ENCODE measurements at regions of chr4 and their contacts with region 1.

Region 1: GRCh38 chr4:39638354-39639240 is at the start of gene SMIM14:
- DNase-seq: peak; percentile 97 to 98
- ATAC-seq: peak; percentile 88 to 90
- H3K4me3 ChIP-seq: peak within 1 kb of the TSS; percentile 95 to 100 (median 98)
- H3K27ac ChIP-seq: peak within 1 kb of the TSS; percentile 99 to 100 (median 100)
- H3K4me1 ChIP-seq: peaks cover 22 to 28% of the 10 kb centered on the region in 2 donors
- H3K27me3 ChIP-seq: no peaks in the 10 kb centered on the region
- CTCF ChIP-seq: peak in 3 of 5 experiments; percentile 31 to 38 (median 35)
- POLR2A ChIP-seq: peak; percentile 98 to 99
- total RNA-seq, gene SMIM14: 6.9 to 15.3 (median 9.5) TPM

Region 2: GRCh38 chr4:39365830-39366771 is 272.5 kb before region 1 on chr4 and contains the start of gene RFC1:
- in situ Hi-C with region 1: no loop called
- intact Hi-C with region 1: loop called (anchors 10 kb)
- DNase-seq: peak; percentile 72 to 84
- ATAC-seq: peak; percentile 91 to 97
- H3K4me3 ChIP-seq: peak within 1 kb of the TSS; percentile 87 to 97 (median 92)
- H3K27ac ChIP-seq: peak within 1 kb of the TSS; percentile 73 to 79 (median 78)
- H3K4me1 ChIP-seq: peaks cover 10 to 16% of the 10 kb centered on the region in 2 donors
- H3K27me3 ChIP-seq: no peaks in the 10 kb centered on the region
- CTCF ChIP-seq: no peak
- POLR2A ChIP-seq: peak in 1 of 2 donors; percentile 13
- total RNA-seq, gene RFC1: 13.9 to 47.9 (median 21.6) TPM

Region 3: GRCh38 chr4:39469429-39470077 is 169.0 kb before region 1 on chr4:
- in situ Hi-C with region 1: loop called in 3 of 4 experiments (anchors 10 to 25 kb)
- intact Hi-C with region 1: no loop called
- DNase-seq: no peak
- ATAC-seq: peak; percentile 85
- H3K4me3 ChIP-seq: no peak overlapping the region
- H3K27ac ChIP-seq: peak overlapping the region in 3 of 4 donors; percentile 32 to 45 (median 35)
- H3K4me1 ChIP-seq: no peaks in the 10 kb centered on the region
- H3K27me3 ChIP-seq: no peaks in the 10 kb centered on the region
- CTCF ChIP-seq: peak; percentile 61 to 76 (median 68)
- POLR2A ChIP-seq: no peak

Region 4: DNA sequence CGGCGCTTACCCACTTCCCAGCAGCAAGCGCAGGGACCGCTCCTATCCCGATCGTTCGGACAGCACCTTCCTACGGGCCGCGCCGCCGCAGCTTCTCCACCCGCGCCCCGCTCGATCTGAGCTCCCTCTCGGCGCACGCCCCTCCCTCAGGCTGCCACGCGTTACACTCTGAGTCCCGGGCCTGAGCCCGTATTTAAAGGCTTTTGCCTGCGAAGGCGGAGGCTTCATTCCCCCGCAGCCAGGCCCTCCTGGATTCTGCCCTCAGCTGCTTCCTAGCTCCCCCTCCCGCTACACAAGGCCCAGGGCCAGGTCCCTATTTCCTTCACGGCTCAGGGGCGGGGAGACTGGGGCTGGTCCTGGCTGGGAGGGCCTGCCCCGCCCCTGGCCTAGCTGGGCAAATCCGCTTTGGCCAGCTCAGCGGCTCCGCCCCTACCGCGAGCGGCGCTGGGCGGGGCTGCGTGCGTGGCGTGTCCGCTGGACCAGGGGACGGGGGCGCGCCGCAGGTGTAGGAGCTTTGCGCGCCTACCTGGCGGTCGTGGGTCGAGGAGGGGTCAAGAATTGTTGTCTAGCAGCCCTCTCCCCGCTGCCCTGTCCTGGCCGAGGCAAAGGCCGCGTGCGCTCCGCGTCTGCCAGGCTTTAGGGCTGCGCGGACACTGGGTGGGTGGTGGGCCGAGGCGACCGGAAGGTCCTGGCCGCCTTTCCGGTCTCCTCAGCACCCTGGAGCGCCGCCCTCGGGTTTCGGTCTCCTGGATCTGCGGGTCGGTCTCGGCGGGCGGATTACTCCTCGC is 111.1 kb before region 1 on chr4 and contains the start of gene UGDH:
- in situ Hi-C with region 1: loop called in 2 of 4 experiments (anchors 5 kb)
- intact Hi-C with region 1: loop called (anchors 1 kb)
- DNase-seq: peak; percentile 94 to 96
- ATAC-seq: peak; percentile 92 to 94
- H3K4me3 ChIP-seq: peak within 1 kb of the TSS; percentile 84 to 95 (median 91)
- H3K27ac ChIP-seq: peak within 1 kb of the TSS; percentile 91 to 98 (median 95)
- H3K4me1 ChIP-seq: peaks cover 24% of the 10 kb centered on the region in 2 donors
- H3K27me3 ChIP-seq: no peaks in the 10 kb centered on the region
- CTCF ChIP-seq: no peak
- POLR2A ChIP-seq: peak; percentile 88 to 89
- total RNA-seq, gene UGDH: 6.1 to 12.7 (median 8.8) TPM

Region 5: DNA sequence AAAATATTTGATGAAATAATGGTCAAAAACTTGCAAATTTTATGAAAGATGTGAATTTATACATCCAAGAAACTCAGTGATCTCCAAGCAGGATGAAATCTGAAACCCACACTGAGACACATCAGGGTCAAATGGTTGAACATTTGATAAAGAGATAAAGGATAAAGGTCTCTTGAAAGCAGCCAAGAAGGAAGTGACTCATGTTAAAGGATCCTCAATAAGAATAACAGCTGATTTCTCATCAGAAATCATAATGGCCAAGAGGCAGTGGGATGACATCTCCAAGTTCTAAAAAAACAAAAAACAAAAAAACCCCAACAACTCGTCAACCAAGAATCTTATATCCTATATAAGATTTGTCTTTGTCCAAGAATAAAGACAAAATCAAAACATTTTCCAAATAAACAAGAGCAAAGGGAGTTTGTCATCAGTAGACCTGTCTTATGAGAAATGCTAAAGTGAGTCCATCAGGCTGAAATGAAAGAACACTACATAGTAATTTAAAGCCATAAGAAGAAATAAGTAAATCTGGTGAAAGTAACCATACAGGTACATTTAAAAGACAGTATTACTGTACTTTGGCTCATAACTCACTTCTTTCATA is 217.4 kb after region 1 on chr4:
- in situ Hi-C with region 1: no loop called
- intact Hi-C with region 1: no loop called
- DNase-seq: no peak
- ATAC-seq: no peak
- H3K4me3 ChIP-seq: no peak overlapping the region
- H3K27ac ChIP-seq: no peak overlapping the region
- H3K4me1 ChIP-seq: no peaks in the 10 kb centered on the region
- H3K27me3 ChIP-seq: no peaks in the 10 kb centered on the region
- CTCF ChIP-seq: no peak
- POLR2A ChIP-seq: no peak

Region 6: DNA sequence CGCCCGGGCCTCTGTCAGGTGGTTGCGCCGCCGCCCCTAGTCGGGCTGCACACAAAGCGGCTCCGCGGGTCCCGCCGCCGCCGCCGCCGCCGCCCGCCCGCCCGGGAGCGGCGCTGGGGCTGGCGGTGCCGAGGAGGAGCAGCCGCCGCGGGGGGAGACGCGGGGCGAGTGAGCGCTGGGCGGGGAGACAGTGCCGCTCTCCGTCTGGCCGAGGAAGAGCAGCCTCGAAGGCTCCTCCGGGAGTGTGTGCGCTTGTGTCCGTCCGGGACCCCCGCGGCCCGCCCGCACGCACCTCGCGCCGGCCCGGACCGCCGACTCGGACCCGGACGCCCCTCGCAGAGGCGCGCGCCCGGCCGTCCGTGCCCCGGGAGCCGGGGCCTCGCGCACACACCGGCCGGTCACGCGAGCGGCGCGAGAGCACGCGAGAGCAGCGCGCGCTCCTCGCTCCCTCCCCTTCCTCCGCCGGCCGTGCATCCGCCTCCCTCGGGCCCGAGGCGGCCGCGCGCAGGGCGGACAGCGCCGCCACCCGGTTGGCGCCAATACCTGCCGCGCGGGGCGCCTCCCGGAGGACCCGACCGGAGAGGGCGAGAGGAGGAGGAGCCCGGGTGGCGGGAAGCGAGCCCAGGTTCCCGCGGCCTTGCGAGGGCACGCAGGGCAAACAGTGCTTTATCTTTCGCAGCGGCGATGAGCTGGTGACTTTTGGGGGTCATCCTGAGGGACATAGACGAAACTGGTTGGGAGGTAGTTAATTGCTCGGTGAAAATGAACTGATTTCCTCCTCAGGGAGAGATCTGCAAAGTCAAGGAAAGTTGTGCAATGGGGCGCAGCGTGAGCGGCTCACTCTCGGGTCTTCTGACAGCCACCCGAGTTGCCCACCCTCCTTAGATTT is 339.1 kb after region 1 on chr4 and contains the start of gene PDS5A:
- in situ Hi-C with region 1: no loop called
- intact Hi-C with region 1: loop called (anchors 1 kb)
- DNase-seq: peak; percentile 73 to 86
- ATAC-seq: peak; percentile 90 to 91
- H3K4me3 ChIP-seq: peak within 1 kb of the TSS; percentile 74 to 96 (median 94)
- H3K27ac ChIP-seq: peak within 1 kb of the TSS; percentile 95 to 99 (median 98)
- H3K4me1 ChIP-seq: peaks cover 10 to 11% of the 10 kb centered on the region in 2 donors
- H3K27me3 ChIP-seq: no peaks in the 10 kb centered on the region
- CTCF ChIP-seq: peak; percentile 69 to 97 (median 97)
- POLR2A ChIP-seq: peak; percentile 92 to 94
- total RNA-seq, gene PDS5A: 28.3 to 40.6 (median 36.7) TPM

Region 7: GRCh38 chr4:40185830-40186664 is 547.5 kb after region 1 on chr4:
- in situ Hi-C with region 1: no loop called
- intact Hi-C with region 1: no loop called
- DNase-seq: no peak
- ATAC-seq: no peak
- H3K4me3 ChIP-seq: no peak overlapping the region
- H3K27ac ChIP-seq: no peak overlapping the region
- H3K4me1 ChIP-seq: no peaks in the 10 kb centered on the region
- H3K27me3 ChIP-seq: peaks cover 0 to 3% (median 0%) of the 10 kb centered on the region in 3 donors
- CTCF ChIP-seq: no peak
- POLR2A ChIP-seq: no peak

Region 8: DNA sequence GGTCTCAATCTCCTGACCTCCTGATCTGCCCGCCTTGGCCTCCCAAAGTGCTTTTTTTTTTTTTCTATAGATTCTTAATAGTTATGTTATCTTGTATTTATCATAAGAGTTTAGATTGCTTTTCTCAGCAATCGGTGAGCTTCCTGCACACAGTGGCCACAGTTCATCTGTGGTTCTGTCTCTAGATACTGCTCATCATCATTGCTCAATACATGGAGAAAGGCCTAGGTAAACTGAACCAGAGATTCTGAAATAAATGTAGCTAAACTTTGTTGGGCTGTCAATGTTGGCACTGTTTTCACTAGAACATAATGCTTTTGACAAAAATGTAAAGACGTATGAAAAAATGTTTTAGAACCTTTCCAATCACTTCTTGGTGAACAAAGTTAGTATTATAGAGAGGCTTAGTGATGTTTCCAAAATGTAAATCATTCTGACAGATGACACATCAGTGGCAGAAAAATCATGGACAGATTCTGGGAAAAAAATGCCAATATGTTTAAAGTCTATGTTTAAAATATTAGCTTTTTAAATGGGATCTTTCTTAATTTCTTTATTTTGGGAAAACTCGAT is 1849.4 kb after region 1 on chr4:
- in situ Hi-C with region 1: no loop called
- intact Hi-C with region 1: no loop called
- DNase-seq: no peak
- ATAC-seq: no peak
- H3K4me3 ChIP-seq: no peak overlapping the region
- H3K27ac ChIP-seq: no peak overlapping the region
- H3K4me1 ChIP-seq: peaks cover 16 to 21% of the 10 kb centered on the region in 2 donors
- H3K27me3 ChIP-seq: no peaks in the 10 kb centered on the region
- CTCF ChIP-seq: no peak
- POLR2A ChIP-seq: no peak

Region 9: GRCh38 chr4:41538017-41538733 is 1899.6 kb after region 1 on chr4 and contains the start of gene LIMCH1:
- in situ Hi-C with region 1: no loop called
- intact Hi-C with region 1: loop called (anchors 5 kb)
- DNase-seq: peak; percentile 78 to 87
- ATAC-seq: peak; percentile 72 to 73
- H3K4me3 ChIP-seq: peak within 1 kb of the TSS; percentile 48 to 52 (median 49)
- H3K27ac ChIP-seq: peak within 1 kb of the TSS; percentile 85 to 94 (median 91)
- H3K4me1 ChIP-seq: peaks cover 58 to 68% of the 10 kb centered on the region in 2 donors
- H3K27me3 ChIP-seq: no peaks in the 10 kb centered on the region
- CTCF ChIP-seq: peak in 1 of 5 experiments; percentile 7
- POLR2A ChIP-seq: peak; percentile 28 to 38
- total RNA-seq, gene LIMCH1: 36.2 to 71.4 (median 52.1) TPM

Measured in gastrocnemius medialis (tissue), 4 donors.